ENCODE measurements at regions of chr15 and their contacts with region 1.

Region 1: DNA sequence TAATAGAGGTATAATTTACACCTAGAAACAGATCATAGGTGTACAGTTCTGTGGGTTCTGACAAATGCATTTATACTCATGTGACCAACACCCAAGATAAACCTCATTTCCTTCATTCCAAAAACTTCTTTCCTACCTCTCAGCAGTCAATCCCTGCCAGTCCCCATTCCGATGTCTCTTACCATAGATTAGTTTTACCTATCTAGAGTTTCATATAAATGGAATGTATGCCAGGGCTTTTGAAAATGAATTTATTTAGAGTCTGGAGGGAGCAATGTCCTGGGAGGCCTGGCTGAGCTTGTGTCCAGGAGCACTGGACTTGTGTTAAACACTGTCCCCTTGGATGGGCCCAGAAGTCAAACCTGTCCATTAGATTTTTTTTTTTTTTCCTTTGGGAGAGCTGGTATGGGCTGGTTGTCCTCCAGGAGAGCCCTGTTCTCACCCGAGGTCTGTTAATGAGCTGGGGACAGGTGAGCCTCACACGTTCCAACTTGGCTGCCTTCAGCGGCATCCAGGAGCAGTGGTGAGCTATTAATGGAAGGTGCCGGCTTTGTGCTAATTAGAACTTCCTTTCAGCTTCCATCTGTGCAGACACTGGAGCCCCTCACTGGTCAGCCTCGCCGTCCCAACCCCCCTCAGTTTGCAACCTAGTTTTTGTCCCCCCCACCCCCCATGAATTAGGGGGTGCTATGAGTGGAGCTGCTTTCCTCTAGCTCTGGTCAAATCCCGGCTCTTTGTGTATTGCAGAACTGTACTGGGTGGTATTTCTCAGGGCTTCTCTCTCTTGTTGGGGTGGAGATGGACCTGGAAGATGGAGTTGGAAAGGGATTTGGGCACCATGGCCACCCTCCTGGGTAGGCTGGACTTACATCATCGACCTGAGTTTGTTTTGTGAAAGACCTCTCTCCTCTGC is 40.7 kb upstream of the POLG start:
- DNase-seq: no peak
- H3K4me3 Mint-ChIP-seq: no peak overlapping the region
- H3K27ac Mint-ChIP-seq: no peak overlapping the region
- H3K4me1 Mint-ChIP-seq: no peaks in the 10 kb centered on the region
- H3K27me3 Mint-ChIP-seq: peaks cover 76% of the 10 kb centered on the region

Region 2: DNA sequence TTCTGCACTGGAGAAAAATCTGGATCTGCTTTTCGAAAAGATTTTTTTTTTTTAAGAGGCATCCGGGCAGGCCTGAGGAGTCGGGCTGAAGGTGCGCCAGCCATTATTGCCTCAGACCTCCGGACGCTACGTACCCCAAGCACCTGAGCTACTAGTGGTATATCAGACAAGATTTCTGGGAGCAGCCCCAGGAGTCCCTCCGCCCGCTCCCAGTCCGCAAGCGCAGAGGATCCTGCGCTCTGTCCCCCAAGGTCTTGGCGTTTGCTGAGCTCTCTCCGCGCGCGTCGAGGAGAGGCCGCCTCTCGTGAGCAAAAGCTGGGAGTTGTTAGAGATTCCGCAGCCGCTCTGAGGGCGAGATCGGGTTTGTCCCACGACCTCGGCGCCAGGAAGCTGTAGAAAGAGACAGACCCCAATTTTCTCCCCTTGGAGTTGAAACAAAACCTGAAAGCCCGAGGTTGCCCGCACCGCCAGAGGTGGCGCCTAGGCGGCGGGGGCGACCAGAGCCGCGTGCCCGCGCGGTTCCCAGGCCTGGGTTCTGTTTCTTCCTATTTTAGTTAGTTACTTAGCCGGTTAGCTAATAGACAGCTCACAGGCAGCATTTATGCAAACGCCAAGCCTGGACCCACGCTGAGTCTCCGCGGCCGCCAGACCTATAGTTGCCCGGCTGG is 31.7 kb after region 1 on chr15:
- intact Hi-C with region 1: loop called (anchors 2 kb)
- DNase-seq: peak; percentile 69
- H3K4me3 Mint-ChIP-seq: peak overlapping the region; percentile 62
- H3K27ac Mint-ChIP-seq: peak overlapping the region; percentile 45
- H3K4me1 Mint-ChIP-seq: peaks cover 30% of the 10 kb centered on the region
- H3K27me3 Mint-ChIP-seq: peaks cover 91% of the 10 kb centered on the region

Measured in activated CD4-positive, alpha-beta T cell treated with anti-CD3 and anti-CD28 coated beads, Interleukin-2, amount 10 ng/mL, durations not matched to agents 24 days and 14 days (primary cell).